ENCODE measurements at regions of chr9 and their contacts with region 1.

Region 1: DNA sequence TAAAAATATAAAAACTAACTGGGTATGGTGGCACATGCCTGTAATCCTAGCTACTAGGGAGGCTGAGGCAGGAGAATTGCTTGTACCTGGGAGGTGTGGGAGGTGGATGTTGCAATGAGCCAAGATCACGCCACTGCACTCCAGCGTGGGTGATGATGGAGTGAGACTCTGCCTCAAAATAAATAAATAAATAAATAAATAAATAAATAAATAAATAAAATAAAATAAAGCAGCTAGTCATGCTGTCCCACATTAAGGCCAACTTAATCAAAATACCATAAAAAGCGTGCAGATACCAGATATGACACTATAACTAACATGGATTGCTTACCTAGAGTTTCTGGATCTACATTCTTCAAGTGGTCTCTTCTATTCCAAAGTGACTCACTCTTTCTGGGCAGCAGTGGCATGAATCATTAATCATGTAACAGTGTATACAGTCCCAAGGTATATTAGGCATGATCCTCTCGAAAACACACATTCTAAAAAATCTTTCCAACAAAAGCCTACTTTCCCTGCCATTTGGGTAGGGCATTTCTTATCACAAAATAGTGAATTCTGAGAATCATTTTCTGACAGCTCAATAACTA is 187.1 kb downstream of the ELAVL2 start:
- DNase-seq: peak; percentile 63
- H3K4me3 ChIP-seq: no peak overlapping the region
- H3K27ac ChIP-seq: no peak overlapping the region
- H3K4me1 ChIP-seq: peaks cover 5% of the 10 kb centered on the region
- H3K27me3 ChIP-seq: no peaks in the 10 kb centered on the region
- CTCF ChIP-seq: no peak

Region 2: GRCh38 chr9:23537192-23538066 is 101.5 kb before region 1 on chr9:
- CTCF ChIA-PET with region 1: no interaction called
- dilution Hi-C with region 1: no loop called
- in situ Hi-C with region 1: loop called in 1 of 2 experiments (anchors 25 kb)
- intact Hi-C with region 1: no loop called
- DNase-seq: no peak
- H3K4me3 ChIP-seq: no peak overlapping the region
- H3K27ac ChIP-seq: no peak overlapping the region
- H3K4me1 ChIP-seq: peaks cover 16% of the 10 kb centered on the region
- H3K27me3 ChIP-seq: no peaks in the 10 kb centered on the region
- CTCF ChIP-seq: no peak

Region 3: DNA sequence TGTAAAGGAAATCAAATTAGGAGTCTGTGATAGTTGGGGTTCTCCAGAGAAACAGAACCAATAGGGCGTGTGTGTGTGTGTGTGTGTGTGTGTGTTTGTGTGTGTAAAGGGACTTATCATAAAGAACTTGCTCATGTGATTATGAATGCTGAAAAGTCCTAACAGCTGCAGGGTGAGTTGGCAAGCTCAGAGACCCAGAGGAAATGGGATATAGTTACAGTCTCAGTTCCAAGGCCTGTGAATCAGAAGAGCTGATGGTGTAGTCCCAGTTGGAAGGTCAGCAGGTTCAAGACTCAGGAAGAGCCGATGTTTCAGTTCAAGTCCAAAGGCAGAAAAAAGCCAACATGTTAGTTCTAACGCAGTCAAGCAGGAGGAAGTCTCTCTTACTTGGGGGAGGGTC is 27.1 kb before region 1 on chr9:
- CTCF ChIA-PET with region 1: no interaction called
- dilution Hi-C with region 1: no loop called
- in situ Hi-C with region 1: no loop called
- intact Hi-C with region 1: no loop called
- DNase-seq: no peak
- H3K4me3 ChIP-seq: no peak overlapping the region
- H3K27ac ChIP-seq: no peak overlapping the region
- H3K4me1 ChIP-seq: no peaks in the 10 kb centered on the region
- H3K27me3 ChIP-seq: no peaks in the 10 kb centered on the region
- CTCF ChIP-seq: no peak

Measured in mammary epithelial cell (primary cell).